ENCODE measurements at regions of chr17 and their contacts with region 1.

Region 1: GRCh38 chr17:79087428-79088143 is 13.0 kb downstream of the ENGASE start:
- DNase-seq: peak; percentile 51
- H3K4me3 ChIP-seq: no peak overlapping the region
- H3K27ac ChIP-seq: no peak overlapping the region
- H3K4me1 ChIP-seq: no peaks in the 10 kb centered on the region
- H3K27me3 ChIP-seq: no peaks in the 10 kb centered on the region
- CTCF ChIP-seq: peak; percentile 81 to 88
- POLR2A ChIP-seq: no peak

Region 2: DNA sequence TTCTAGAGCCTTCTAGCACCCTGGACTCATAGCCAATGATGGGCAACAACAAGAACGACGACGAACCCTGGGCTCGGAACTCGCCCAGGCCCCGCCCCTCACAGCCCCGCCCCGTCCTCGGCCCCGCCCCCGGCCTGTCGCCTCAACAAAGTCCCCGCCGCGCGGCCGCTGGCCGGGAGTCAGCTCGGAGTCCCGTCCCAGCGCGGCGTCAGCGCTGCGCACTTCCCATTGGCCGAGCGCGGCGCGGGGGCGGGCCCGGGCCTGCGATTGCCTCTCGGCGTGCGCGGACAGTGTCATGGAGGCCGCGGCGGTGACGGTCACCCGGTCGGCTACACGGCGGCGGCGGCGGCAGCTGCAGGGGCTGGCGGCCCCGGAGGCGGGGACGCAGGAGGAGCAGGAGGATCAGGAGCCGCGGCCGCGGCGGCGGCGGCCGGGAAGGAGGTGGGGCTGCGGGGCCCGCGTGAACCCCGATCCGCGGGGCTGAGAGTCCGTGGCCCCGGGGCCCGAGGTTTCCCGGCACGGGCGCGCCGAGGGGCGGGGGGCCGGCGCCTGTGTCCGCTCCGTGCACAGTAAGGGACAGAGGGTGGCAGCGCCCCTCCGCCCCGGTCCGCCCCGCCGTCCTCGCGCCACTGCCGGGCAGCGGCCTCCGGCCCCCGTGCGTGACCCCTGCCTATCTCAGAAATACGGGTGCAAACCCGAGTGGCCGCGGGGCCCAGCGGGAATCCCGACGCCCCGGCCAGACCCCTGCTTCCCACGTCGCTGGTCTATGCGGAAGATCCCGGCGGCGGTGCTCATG is 12.7 kb before region 1 on chr17 and contains the start of gene ENGASE:
- CTCF ChIA-PET with region 1: interaction called, 20 read pairs
- POLR2A ChIA-PET with region 1: no interaction called
- dilution Hi-C with region 1: no loop called
- intact Hi-C with region 1: no loop called
- DNase-seq: peak; percentile 90
- H3K4me3 ChIP-seq: peak within 1 kb of the TSS; percentile 48 to 76 (median 71)
- H3K27ac ChIP-seq: no peak within 1 kb of the TSS
- H3K4me1 ChIP-seq: peaks cover 8% of the 10 kb centered on the region
- H3K27me3 ChIP-seq: peaks cover 2 to 4% of the 10 kb centered on the region in 2 experiments
- CTCF ChIP-seq: no peak
- POLR2A ChIP-seq: peak; percentile 38
- total RNA-seq, gene ENGASE: 20.8 and 27.2 TPM in 2 replicates

Region 3: GRCh38 chr17:79160980-79161636 is 73.5 kb after region 1 on chr17:
- CTCF ChIA-PET with region 1: interaction called, 6 read pairs
- POLR2A ChIA-PET with region 1: no interaction called
- dilution Hi-C with region 1: no loop called
- intact Hi-C with region 1: loop called (anchors 10 kb)
- DNase-seq: peak; percentile 30
- H3K4me3 ChIP-seq: no peak overlapping the region
- H3K27ac ChIP-seq: peak overlapping the region; percentile 72
- H3K4me1 ChIP-seq: peaks cover 6% of the 10 kb centered on the region
- H3K27me3 ChIP-seq: no peaks in the 10 kb centered on the region
- CTCF ChIP-seq: no peak
- POLR2A ChIP-seq: no peak

Region 4: DNA sequence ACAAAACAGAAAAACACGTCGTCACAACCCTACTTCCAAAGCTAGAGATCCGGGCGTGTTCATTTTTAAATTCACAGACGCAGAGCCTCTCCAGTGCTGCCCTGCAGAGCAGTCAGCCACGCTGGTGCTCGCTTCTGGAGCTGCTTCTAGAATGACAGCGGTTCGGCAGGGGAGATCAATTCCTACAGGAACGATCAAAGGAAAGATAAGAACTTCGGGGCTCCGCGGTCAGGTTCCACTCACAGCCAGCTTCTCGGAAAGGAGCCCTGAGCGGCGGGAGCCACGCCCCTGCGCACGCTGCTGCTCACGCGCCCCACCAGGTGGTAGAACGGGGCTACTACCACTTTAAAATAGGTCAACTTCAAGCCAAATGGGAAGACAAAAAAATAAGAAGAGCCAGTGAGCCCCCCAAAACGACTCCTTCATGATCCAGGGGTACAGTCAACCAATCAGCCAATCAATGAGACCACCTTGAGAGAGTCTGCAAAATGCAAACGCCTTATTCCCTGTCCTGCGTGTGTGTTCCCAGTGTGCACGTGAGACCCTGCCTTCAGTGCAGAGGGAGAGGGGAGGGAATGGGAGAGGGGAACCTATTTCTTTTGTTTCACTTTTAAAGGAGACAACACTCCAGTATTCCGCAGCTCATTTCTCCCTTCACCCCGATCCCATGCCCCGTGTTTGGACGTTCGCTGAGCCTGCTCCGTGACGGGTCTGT is 313.6 kb after region 1 on chr17:
- CTCF ChIA-PET with region 1: interaction called, 428 read pairs
- POLR2A ChIA-PET with region 1: no interaction called
- dilution Hi-C with region 1: no loop called
- intact Hi-C with region 1: no loop called
- DNase-seq: peak; percentile 73
- H3K4me3 ChIP-seq: no peak overlapping the region
- H3K27ac ChIP-seq: no peak overlapping the region
- H3K4me1 ChIP-seq: peaks cover 4% of the 10 kb centered on the region
- H3K27me3 ChIP-seq: peaks cover 6 to 10% of the 10 kb centered on the region in 2 experiments
- CTCF ChIP-seq: peak; percentile 87 to 92
- POLR2A ChIP-seq: no peak

Region 5: DNA sequence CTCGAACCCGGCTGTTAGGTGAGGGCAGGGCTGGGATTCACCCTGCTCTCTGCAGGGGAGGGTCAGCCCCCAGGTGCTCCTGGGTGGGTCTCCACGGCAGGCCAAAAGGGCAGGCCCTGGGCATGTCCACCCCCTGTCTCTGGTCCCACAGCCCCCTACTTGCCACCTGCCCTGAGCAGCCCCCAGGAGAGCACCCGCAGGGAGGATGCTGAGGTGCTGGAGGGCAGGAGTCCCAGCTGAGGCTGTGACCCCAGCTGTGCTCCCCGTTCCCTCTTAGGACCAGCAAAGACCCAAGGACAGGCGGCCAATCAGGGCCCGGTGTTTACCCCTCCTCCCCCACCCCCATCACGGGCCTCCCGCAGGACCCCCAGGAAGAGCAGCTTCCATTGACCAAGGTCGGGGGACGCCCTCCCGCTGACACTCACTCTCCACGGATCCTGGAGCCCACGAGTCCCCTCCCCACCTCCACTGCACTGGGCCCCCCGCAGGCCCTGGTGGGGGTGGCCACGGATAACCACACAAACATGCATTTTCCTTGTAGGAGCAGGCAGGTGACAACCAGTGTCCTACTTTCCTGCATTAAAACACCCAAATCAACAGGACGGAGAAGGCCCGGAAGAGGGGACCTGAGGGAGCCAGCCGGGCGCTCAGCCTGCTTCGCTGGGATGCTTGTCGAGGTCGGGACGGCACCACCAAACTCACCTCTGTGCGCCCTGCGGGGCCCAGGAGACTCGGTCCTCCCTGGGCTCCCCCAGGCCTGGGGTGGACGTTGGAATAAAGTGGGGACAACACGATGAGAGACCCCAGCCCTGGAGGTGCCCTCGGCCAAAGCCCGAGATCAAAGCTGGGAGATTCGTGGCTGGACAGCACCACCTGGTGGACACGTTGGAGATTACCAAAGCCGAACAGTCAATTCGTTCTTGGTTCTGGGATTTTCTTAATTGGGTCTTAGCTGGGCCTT is 620.6 kb after region 1 on chr17:
- CTCF ChIA-PET with region 1: interaction called, 9 read pairs
- POLR2A ChIA-PET with region 1: no interaction called
- dilution Hi-C with region 1: no loop called
- intact Hi-C with region 1: loop called (anchors 1 kb)
- DNase-seq: peak; percentile 35
- H3K4me3 ChIP-seq: no peak overlapping the region
- H3K27ac ChIP-seq: no peak overlapping the region
- H3K4me1 ChIP-seq: no peaks in the 10 kb centered on the region
- H3K27me3 ChIP-seq: no peaks in the 10 kb centered on the region
- CTCF ChIP-seq: peak; percentile 57 to 75
- POLR2A ChIP-seq: no peak